Colonic mucosa (tissue), 4 donors: ENCODE measurements at regions of chr1 and their contacts with region 1.

Region 1: GRCh38 chr1:100459358-100460114 is 78.4 kb upstream of the GPR88 start:
- DNase-seq: peak; percentile 73
- H3K4me3 ChIP-seq: no peak overlapping the region
- H3K27ac ChIP-seq: no peak overlapping the region
- H3K4me1 ChIP-seq: no peaks in the 10 kb centered on the region
- H3K27me3 ChIP-seq: no peaks in the 10 kb centered on the region
- CTCF ChIP-seq: peak; percentile 74

Region 2: DNA sequence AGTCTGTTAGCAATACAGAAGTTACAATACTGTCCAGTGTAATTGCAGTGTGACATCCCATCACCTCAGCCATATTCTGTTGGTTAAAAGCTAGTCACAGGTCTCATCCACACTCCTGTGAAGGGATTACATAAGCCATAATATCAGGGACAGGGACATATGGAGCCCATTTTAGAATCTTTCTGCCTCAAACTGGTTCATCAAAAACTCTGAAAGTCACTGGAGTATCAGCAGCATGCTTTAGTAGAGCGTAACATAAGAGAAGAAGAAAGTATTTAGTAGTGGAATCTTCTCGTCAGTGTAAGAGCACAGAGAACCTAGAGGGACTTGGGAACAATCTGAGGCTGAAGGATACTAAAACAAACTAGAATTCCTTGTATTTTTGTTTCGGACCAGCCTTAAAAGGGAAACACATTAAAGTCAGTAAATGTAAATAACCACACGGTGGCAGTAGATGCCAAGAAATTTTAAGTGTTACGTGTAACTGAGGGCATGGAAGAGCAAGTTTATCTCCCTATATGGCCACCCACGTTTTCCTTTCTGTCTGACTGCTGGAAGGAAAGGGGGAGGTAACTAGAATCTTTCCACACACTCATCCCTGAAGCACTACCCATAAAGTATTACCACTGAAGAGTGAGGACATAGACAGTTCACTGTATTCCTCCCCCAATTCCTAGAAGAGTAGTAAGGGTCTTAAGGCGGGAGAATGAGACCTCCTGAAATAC is 651.0 kb before region 1 on chr1:
- intact Hi-C with region 1: loop called (anchors 2 kb)
- DNase-seq: peak; percentile 56
- H3K4me3 ChIP-seq: no peak overlapping the region
- H3K27ac ChIP-seq: no peak overlapping the region
- H3K4me1 ChIP-seq: no peaks in the 10 kb centered on the region
- H3K27me3 ChIP-seq: no peaks in the 10 kb centered on the region
- CTCF ChIP-seq: peak; percentile 45

Region 3: DNA sequence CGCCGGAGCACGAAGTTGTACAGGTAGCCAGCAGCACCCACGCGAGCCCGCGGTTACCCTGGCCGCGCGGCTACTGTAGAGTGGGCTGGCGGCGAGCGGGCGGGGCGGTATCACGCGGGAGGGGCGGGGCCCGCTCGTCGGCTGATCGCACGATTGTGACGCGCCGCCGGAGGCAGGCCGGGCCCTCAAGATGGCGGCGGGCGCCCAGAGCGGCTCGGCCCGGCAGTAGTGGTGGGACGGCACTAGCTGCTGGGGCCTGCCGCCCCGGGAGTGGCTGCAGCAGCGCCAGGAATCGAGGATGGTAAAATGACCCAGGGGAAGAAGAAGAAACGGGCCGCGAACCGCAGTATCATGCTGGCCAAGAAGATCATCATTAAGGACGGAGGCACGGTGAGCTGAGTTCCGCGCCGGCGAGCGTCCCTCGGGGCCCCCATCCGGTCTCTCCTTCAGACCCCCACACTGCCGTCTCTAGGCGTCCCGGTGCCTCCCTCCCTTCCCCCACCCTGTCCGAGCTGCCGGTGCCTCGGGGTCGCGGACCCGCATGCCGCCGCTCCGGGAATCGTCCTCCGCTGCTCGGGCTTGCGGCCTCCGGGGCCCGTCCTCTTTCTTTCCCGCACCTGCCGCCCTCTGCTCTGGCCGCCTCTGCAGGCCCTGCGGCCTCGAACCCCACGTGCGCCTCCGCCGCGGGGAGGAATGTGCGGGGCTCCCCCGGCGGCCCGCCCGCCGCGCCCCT is 421.4 kb before region 1 on chr1:
- intact Hi-C with region 1: loop called (anchors 10 kb)
- DNase-seq: peak; percentile 88
- H3K4me3 ChIP-seq: peak overlapping the region; percentile 73
- H3K27ac ChIP-seq: peak overlapping the region; percentile 98
- H3K4me1 ChIP-seq: peaks cover 12% of the 10 kb centered on the region
- H3K27me3 ChIP-seq: no peaks in the 10 kb centered on the region
- CTCF ChIP-seq: no peak

Region 4: GRCh38 chr1:100132566-100133477 is 326.7 kb before region 1 on chr1 and contains the starts of genes SASS6 and TRMT13:
- intact Hi-C with region 1: loop called (anchors 10 kb)
- DNase-seq: peak; percentile 99
- H3K4me3 ChIP-seq: peak within 1 kb of the TSS; percentile 76
- H3K27ac ChIP-seq: peak within 1 kb of the TSS; percentile 59
- H3K4me1 ChIP-seq: peaks cover 11% of the 10 kb centered on the region
- H3K27me3 ChIP-seq: no peaks in the 10 kb centered on the region
- CTCF ChIP-seq: no peak
- total RNA-seq, gene SASS6: 3.3 to 8.0 TPM
- total RNA-seq, gene TRMT13: 8.6 to 11.5 TPM

Region 5: DNA sequence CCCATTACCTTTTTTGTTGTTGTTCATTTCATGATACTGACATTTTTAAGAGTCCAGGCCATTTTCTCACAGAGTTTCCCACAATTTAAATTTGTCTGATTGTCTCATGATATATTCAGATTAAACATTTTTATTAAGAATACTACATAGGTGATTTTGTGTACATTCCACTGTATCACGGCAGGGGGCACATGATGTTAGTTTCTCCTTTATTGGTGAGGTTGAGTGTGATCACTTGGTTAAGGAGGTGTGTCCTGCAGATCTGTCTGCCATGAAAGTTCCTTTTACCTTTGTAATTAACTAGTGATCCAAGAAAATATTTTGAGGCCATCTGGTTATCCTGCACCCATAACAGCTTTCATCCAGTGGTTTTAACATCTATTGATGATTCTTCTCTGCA is 181.7 kb before region 1 on chr1:
- intact Hi-C with region 1: loop called (anchors 10 kb)
- DNase-seq: no peak
- H3K4me3 ChIP-seq: no peak overlapping the region
- H3K27ac ChIP-seq: no peak overlapping the region
- H3K4me1 ChIP-seq: no peaks in the 10 kb centered on the region
- H3K27me3 ChIP-seq: no peaks in the 10 kb centered on the region
- CTCF ChIP-seq: no peak

Region 6: DNA sequence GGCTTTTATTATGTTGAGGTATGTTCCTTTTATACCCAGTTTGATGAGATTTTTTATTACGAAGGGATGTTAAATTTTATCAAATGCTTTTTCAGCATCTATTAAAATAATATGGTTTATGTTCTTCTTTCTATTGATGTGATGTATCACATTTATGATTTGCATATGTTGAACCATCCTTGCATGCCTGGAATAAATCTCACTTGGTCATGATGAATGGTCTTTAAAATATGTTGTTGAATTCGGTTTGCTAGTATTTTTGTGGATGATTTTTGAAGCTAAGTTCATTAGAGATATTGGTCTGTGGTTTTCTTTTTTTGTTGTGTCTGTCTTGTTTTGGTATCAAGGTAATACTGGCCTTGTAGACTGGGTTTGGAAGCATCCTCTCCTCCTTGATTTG is 92.5 kb after region 1 on chr1:
- intact Hi-C with region 1: no loop called
- DNase-seq: no peak
- H3K4me3 ChIP-seq: no peak overlapping the region
- H3K27ac ChIP-seq: no peak overlapping the region
- H3K4me1 ChIP-seq: no peaks in the 10 kb centered on the region
- H3K27me3 ChIP-seq: no peaks in the 10 kb centered on the region
- CTCF ChIP-seq: no peak

Region 7: GRCh38 chr1:100866041-100866900 is 406.7 kb after region 1 on chr1:
- intact Hi-C with region 1: loop called (anchors 5 kb)
- DNase-seq: no peak
- H3K4me3 ChIP-seq: no peak overlapping the region
- H3K27ac ChIP-seq: no peak overlapping the region
- H3K4me1 ChIP-seq: no peaks in the 10 kb centered on the region
- H3K27me3 ChIP-seq: no peaks in the 10 kb centered on the region
- CTCF ChIP-seq: peak; percentile 40